SK-N-SH (cell line): ENCODE measurements at regions of chr5 and their contacts with region 1.

Region 1: DNA sequence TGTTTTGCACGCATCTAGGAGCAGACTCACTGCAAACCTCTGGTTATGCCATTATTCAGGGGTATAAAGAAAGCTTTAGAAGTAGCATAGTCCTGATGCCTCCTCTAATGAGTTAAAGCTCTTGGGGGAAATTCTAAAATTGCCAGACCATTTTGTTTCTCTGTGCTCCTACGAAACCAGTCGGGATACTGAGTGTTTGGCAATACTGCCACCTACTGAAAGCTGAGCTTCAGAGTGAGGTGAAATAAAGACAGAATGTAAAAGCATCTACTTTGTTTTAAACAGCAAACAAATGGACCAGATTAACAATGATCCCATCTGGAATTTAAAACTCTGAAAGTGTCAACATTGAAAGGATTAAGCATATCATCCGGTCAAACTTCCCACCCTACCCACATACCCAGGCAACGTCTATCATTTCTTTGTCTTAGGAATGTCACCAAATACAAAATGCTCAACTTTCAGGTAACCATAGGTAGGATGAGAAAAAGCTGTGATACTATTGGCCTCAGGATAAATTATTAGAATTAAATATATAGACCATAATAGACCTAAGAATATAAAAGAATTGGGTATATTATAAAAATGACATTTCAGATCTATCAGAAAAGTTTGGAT is 77.8 kb upstream of the SHISAL2B start:
- DNase-seq: peak; percentile 20
- H3K4me3 ChIP-seq: peak overlapping the region in 1 of 2 experiments; percentile 39; a peak in 1 of 4 replicates
- H3K27ac ChIP-seq: no peak overlapping the region
- H3K4me1 ChIP-seq: no peaks in the 10 kb centered on the region
- H3K27me3 ChIP-seq: peaks cover 22% of the 10 kb centered on the region
- CTCF ChIP-seq: peak; percentile 84
- EP300 ChIP-seq: no peak
- RAD21 ChIP-seq: peak; percentile 86

Region 2: DNA sequence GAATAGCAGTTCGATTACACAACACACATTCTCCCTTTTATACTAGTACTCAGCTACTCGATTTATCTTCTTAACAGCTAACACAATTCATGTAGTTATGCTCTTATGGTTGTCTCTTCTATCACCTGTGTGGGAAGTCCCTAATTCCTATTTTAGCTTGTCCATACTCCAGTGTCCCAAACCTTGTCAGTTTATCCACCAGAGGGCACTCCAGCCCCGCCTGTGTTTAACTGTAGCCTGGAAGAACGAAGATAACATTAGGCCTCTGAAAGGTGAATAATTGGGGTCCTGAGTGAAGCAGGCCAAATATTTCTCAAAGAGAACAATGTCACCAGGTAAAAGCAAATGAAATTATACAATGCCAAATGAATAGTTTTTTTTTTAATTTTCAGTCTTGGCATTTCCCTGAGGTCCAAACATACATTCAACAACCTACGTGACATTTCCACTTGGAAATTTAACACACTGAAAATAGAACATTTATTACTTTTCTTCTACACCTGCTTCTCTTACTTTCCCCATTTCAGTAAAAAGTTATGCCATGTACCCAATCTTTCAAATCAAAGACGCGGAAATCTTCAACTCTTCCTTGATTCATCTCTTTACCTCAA is 1210.9 kb before region 1 on chr5:
- CTCF ChIA-PET with region 1: no interaction called
- POLR2A ChIA-PET with region 1: no interaction called
- DNase-seq: peak; percentile 27
- H3K4me3 ChIP-seq: no peak overlapping the region; a peak in 1 of 4 replicates
- H3K27ac ChIP-seq: no peak overlapping the region
- H3K4me1 ChIP-seq: no peaks in the 10 kb centered on the region; a peak in 1 of 4 replicates
- H3K27me3 ChIP-seq: no peaks in the 10 kb centered on the region
- CTCF ChIP-seq: peak; percentile 93
- EP300 ChIP-seq: no peak
- RAD21 ChIP-seq: peak; percentile 84

Region 3: GRCh38 chr5:64229163-64229774 is 383.2 kb before region 1 on chr5:
- CTCF ChIA-PET with region 1: interaction called, 120 read pairs
- POLR2A ChIA-PET with region 1: no interaction called
- DNase-seq: peak; percentile 57
- H3K4me3 ChIP-seq: peak overlapping the region in 1 of 2 experiments; percentile 30; a peak in 1 of 4 replicates
- H3K27ac ChIP-seq: no peak overlapping the region
- H3K4me1 ChIP-seq: no peaks in the 10 kb centered on the region
- H3K27me3 ChIP-seq: no peaks in the 10 kb centered on the region
- CTCF ChIP-seq: peak; percentile 80
- EP300 ChIP-seq: no peak
- RAD21 ChIP-seq: peak; percentile 68

Region 4: DNA sequence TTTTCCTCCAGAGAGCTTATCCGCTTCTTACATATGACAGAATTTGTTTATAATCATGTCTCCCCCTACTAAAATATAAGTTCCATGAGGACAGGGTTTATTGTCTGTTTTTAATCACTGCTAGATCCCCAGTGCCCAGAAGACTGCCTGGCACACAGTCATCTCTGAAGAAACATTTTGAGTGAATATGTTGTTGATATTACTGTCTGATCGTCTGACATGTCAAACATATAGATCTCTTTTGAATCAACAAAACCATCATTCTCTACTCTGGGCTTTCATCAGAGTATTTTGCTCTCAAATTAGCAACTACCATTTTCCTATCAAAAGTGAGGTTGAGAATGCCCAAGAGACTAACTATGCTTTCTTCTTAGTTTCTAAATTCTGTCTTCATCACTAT is 10.5 kb after region 1 on chr5:
- CTCF ChIA-PET with region 1: interaction called, 12 read pairs
- POLR2A ChIA-PET with region 1: no interaction called
- DNase-seq: no peak
- H3K4me3 ChIP-seq: no peak overlapping the region
- H3K27ac ChIP-seq: no peak overlapping the region
- H3K4me1 ChIP-seq: no peaks in the 10 kb centered on the region; a peak in 1 of 4 replicates
- H3K27me3 ChIP-seq: peaks cover 36% of the 10 kb centered on the region; the same call in 1 of the 2 replicates
- CTCF ChIP-seq: no peak
- EP300 ChIP-seq: no peak
- RAD21 ChIP-seq: no peak